GM13976 (cell line): ENCODE measurements at regions of chr12 and their contacts with region 1.

Region 1: DNA sequence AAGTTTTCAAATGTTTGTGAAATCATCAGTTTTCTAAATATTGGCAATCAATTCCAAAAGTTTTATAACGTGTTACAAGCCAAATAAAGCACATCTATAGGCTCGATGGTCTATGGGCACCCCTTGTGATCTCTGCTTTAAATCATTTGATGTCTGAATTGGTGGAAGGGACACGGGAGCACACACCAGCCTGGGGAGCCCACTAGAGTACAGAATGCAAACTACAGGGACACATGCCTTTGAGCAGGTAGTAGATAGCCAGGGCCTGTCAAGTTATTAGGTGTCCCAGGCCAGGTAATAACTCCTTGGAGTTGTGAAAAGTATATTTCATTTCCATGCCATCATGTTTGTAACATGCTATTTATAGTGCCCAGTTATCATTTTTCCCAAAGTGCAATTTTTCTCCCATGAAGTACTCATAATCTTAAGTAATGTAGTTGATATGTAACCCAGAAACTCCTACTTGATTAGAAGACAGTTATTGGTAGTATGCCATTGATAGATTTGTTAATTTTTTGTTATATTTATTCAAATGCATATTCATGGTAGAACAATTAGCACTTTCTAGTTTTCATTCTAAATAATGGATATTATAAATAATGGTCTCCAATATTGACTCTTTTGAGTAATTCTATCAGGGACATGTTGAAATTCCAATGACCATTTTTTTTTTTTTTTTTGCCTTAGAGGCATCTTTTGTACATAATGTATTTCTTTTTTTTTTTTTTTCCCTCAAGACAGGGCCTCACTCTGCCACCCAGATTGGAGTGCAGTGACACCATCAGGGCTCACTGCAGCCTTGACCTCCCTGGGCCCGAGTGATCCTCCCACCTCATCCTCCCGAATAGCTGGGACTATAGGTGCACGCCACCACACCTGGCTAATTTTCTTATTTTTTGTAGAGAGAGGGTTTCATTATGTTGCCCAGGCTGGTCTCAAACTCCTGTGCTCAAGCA is 96.9 kb upstream of the FGD4 start:
- DNase-seq: peak; percentile 72
- CTCF ChIP-seq: peak; percentile 58

Region 2: DNA sequence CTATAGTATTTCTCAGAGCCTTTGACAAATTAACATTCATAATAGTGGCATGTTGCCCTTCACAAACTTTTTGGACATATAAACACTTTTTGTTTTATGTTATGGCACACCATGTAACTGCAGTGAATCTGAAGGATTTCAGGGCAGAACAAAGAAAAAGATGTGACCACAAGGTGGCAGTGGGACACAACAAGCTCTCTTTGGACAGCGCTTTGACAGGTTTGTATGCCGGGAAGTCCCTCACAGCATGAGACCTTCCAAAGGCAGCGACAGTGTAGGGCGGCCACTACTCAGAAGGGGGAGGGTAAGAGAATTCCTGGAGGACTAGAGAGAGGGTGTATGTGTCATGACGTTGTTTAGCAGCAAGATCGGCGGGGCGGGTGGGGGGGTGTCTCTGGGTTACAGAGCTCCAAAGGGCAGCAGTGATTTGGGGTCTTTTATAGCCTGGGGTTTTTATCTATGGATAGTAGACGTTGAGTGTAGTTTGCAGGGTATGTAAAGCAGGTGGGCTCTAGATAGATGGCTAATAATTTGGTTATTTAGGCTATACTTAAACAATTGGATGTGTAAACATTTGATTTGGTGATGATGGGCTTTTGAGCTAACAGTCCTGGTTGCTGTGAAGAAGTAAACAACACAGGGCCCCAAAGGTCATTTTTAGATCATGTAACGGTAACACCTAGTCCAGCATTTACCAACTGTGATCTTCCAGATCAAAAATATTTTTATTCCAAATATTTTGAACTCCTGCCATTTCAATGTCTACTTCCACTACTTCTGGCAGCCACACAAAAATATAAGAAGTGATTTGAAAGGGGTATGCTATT is 620.1 kb before region 1 on chr12:
- in situ Hi-C with region 1: loop called (anchors 10 kb)
- DNase-seq: peak; percentile 76
- CTCF ChIP-seq: peak; percentile 57

Region 3: DNA sequence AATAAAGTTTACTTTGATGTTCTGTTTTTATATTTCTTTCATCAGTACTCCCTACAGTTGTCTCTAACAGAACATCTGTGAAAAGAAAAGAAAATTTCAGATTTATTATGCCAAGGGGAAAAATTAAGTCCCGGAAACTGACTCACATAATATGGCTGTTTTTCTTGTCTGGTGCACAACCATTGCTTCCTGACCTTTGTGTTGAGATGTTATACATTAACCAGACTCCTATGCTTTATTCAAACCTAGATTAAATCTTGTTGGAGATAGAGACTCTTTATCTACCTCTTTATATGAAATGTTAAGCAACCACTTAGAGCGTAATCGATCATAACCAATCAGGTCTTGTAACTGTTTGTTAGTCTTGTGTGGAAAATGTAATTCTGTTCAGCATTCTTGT is 233.4 kb before region 1 on chr12:
- in situ Hi-C with region 1: loop called (anchors 10 kb)
- DNase-seq: no peak
- CTCF ChIP-seq: no peak